ENCODE measurements at regions of chr3 and their contacts with region 1.

Region 1: GRCh38 chr3:19543212-19543841 is 390.7 kb downstream of the EFHB start:
- DNase-seq: no peak
- H3K4me3 ChIP-seq: no peak overlapping the region
- H3K27ac ChIP-seq: no peak overlapping the region
- H3K4me1 ChIP-seq: peaks cover 0 to 35% (median 0%) of the 10 kb centered on the region in 4 donors
- H3K27me3 ChIP-seq: no peaks in the 10 kb centered on the region
- CTCF ChIP-seq: peak; percentile 35 to 53

Region 2: DNA sequence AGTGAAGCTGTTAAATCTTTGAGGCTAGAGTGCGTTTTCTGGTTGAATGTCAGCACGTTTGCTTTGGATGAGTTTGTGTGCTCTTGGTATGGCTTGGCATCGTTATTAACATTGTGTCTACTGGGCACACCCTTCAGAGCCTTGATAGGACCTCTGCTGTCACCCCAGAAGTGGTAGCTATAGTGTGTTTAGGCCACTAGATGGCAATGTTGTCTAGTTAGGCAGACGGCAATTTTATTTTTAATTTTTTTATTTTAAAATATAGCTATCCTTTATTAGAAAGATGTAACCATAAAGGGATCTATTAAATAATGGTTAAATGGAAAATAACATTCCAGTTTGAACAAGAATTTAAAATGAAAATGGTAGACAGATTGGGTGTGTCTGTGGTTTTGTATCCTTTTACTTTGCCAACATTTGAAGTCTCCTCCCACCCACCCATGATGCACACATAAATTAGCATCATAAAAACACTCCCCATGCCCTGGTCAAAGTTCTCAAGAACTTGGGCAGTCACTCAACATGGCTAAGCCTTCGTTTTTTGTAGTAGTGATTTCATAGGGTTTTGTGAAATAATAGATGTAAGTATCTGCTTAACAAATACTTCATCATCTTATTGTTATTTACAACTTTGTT is 194.3 kb before region 1 on chr3:
- intact Hi-C with region 1: loop called (anchors 10 kb)
- DNase-seq: no peak
- H3K4me3 ChIP-seq: no peak overlapping the region
- H3K27ac ChIP-seq: no peak overlapping the region
- H3K4me1 ChIP-seq: peaks cover 0 to 11% (median 3%) of the 10 kb centered on the region in 4 donors
- H3K27me3 ChIP-seq: no peaks in the 10 kb centered on the region
- CTCF ChIP-seq: peak; percentile 55 to 85